ENCODE measurements at regions of chr5 and their contacts with region 1.

Region 1: DNA sequence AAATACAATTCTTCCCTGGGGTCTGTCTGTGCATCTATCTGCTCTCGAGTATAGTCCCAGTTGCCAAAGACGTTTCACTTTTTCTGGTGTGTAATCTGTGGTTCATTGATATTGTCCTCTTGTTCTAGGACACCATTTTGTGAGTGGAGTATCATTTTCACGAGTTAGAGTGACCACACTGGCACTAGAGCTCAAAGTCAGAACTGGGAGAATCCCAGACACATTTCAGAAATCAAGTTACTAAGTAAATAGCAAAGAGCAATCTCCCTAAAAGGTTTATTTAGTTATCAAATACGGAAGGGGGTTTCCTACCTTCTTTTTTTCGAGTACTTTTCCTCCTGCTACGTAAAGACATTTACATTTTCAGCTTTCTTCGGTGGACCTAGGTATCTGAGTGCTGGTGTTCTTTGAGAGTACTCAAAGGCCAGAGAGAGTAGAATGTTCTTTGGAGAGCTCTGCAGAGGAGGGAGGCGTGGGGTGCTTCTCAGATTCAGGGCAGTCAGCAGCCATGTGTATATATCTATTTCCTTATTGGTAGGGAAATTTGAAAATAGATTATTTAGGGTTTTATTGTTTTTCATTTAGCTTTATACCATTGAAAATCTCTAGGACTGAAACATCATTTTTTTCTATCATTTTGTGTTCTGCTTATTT is 8.9 kb upstream of the HSPA9 start:
- DNase-seq: no peak
- ATAC-seq: no peak
- H3K4me3 ChIP-seq: no peak overlapping the region
- H3K27ac ChIP-seq: no peak overlapping the region
- H3K4me1 ChIP-seq: peaks cover 0 to 6% (median 0%) of the 10 kb centered on the region in 12 donors
- H3K27me3 ChIP-seq: no peaks in the 10 kb centered on the region
- CTCF ChIP-seq: no peak
- POLR2A ChIP-seq: no peak

Region 2: DNA sequence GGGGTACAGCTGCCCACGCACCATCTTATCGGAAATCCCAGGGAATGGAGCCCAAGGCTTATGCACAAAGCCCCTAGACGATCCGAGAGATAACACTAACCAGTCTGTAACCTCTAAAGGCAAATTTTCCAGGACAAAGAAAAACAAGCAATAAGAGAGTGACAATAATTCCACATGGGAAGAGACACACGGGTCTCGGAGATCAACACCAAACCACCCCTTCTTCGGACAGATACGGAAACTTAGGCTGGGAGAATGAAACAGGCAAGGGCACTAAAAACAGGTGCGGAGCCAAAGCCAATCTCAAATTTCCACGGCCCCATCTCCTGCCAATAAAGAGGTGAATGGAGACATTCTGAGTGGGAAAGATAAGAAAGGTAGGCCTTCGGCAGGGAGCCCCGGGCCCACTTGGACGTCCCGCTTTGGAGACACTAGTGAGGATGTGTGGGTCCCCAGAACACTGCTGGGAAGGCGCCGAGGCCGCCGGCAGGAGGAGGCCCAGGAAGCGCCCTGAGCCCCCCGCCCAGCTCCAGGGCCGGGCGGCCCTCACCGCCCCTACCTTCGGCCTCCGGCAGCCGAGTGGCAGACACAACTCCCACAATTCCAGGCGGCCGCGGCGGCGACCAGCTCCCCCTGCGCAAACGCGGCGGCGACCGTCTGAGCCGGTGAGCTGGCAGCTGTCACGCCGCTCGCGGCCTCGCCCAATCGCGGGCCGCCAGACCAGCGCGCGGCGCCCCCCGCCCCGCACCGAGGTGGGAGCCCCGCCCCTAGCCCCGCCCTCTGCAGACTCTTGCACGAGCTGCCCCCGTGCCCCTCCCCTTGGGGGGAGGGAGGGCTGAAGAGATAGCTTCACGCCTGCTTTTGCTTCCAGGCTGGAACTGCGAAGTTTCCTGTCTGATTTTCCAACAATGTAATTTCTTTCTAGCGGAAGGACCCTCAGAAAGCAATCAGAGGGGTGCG is 613.9 kb after region 1 on chr5 and contains the start of gene SIL1:
- intact Hi-C with region 1: loop called in 1 of 10 experiments (anchors 5 kb)
- DNase-seq: peak; percentile 97 to 99 (median 97)
- ATAC-seq: peak; percentile 97 to 99 (median 98)
- H3K4me3 ChIP-seq: peak within 1 kb of the TSS; percentile 53 to 96 (median 72)
- H3K27ac ChIP-seq: peak within 1 kb of the TSS; percentile 62 to 98 (median 92)
- H3K4me1 ChIP-seq: peaks cover 0 to 35% (median 14%) of the 10 kb centered on the region in 12 donors
- H3K27me3 ChIP-seq: no peaks in the 10 kb centered on the region
- CTCF ChIP-seq: no peak
- POLR2A ChIP-seq: peak; percentile 58 to 95
- total RNA-seq, gene SIL1: 33.8 to 341 (median 39.8) TPM

Region 3: GRCh38 chr5:139251281-139251687 is 667.2 kb after region 1 on chr5:
- intact Hi-C with region 1: loop called in 1 of 10 experiments (anchors 10 kb)
- DNase-seq: no peak
- ATAC-seq: no peak
- H3K4me3 ChIP-seq: no peak overlapping the region
- H3K27ac ChIP-seq: no peak overlapping the region
- H3K4me1 ChIP-seq: peaks cover 0 to 12% (median 0%) of the 10 kb centered on the region in 12 donors
- H3K27me3 ChIP-seq: no peaks in the 10 kb centered on the region
- CTCF ChIP-seq: peak in 5 of 12 donors; percentile 8 to 35 (median 23)
- POLR2A ChIP-seq: no peak

Measured in heart left ventricle (tissue), 16 donors.